Right cardiac atrium (tissue), 5 donors: ENCODE measurements at regions of chrX and their contacts with region 1.

Region 1: GRCh38 chrX:14039344-14039743 is 9.7 kb upstream of the GEMIN8 start:
- DNase-seq: peak in 1 of 3 donors; percentile 51
- ATAC-seq: peak in 1 of 2 donors; percentile 65
- H3K4me3 ChIP-seq: no peak overlapping the region
- H3K27ac ChIP-seq: no peak overlapping the region
- H3K4me1 ChIP-seq: no peaks in the 10 kb centered on the region
- H3K27me3 ChIP-seq: no peaks in the 10 kb centered on the region

Region 2: DNA sequence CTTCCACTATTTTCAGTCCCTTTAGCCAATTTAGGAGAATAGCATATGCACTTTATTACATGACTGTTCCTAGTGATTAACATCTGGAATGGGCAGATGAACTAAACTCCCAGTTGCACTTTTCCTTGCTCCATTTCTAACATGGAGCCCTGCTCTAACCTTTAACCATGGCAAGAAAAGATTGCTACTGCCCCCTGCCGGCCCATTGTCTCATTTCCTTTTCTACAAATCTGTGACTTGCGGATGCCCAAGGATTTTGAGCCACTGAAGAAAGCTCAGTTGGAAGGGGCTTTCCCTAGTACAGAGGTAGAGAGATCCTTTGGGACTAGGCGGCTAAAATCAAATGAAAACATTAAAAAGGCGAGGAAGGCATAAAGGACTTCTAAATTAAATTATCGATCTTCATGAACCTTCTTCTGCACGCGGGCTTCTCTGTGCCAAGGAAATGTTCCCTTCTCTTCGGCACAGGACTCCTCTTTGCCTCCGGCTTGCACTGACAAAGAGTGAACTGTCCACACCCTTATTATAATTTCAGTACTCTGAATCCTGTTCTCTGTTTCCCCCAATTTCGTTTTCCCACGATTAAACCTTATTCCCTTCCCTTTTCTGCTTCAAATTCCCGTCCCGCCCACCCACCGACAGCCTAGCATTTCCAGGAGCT is 489.4 kb after region 1 on chrX:
- intact Hi-C with region 1: loop called in 1 of 4 experiments (anchors 2 kb)
- DNase-seq: peak; percentile 24 to 74 (median 57)
- ATAC-seq: no peak
- H3K4me3 ChIP-seq: no peak overlapping the region
- H3K27ac ChIP-seq: no peak overlapping the region
- H3K4me1 ChIP-seq: no peaks in the 10 kb centered on the region
- H3K27me3 ChIP-seq: no peaks in the 10 kb centered on the region

Region 3: GRCh38 chrX:15143050-15143824 is 1103.9 kb after region 1 on chrX:
- intact Hi-C with region 1: loop called in 1 of 4 experiments (anchors 10 kb)
- DNase-seq: peak; percentile 33 to 56 (median 54)
- ATAC-seq: no peak
- H3K4me3 ChIP-seq: no peak overlapping the region
- H3K27ac ChIP-seq: no peak overlapping the region
- H3K4me1 ChIP-seq: no peaks in the 10 kb centered on the region
- H3K27me3 ChIP-seq: no peaks in the 10 kb centered on the region

Region 4: DNA sequence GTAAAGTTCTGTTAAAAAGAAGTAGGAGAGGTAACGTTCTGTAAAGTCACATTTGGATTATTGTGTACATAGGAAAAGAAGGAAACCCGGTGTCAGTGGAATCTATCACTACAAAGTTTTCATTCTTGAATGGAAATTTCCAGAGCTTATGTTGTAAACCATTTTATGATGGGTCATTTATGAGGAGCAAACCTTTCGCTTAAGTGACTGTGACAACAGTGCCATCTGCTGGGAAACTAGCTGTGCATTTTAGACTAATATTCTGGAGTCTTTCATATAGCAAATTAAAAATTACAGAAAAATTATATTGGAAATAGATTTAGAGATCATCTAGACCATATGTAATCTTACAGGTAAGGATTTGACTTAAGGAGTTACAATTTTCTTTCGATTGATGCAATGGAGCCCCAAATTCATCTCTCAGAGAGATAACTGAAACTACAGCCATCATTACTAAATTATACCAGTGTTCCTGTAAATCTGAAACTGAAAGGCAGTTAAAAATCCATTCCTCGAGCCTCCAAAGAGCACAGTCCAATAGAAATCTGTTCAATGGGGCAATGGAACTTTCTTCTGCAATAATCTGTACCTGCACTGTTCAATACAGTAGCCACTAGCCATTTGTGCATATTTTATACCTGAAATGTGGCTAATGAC is 1203.7 kb after region 1 on chrX:
- intact Hi-C with region 1: loop called in 2 of 4 experiments (anchors 5 to 10 kb)
- DNase-seq: no peak
- ATAC-seq: no peak
- H3K4me3 ChIP-seq: no peak overlapping the region
- H3K27ac ChIP-seq: no peak overlapping the region
- H3K4me1 ChIP-seq: no peaks in the 10 kb centered on the region
- H3K27me3 ChIP-seq: no peaks in the 10 kb centered on the region